CD4-positive, alpha-beta memory T cell (primary cell): ENCODE measurements at regions of chr10 and their contacts with region 1.

Region 1: DNA sequence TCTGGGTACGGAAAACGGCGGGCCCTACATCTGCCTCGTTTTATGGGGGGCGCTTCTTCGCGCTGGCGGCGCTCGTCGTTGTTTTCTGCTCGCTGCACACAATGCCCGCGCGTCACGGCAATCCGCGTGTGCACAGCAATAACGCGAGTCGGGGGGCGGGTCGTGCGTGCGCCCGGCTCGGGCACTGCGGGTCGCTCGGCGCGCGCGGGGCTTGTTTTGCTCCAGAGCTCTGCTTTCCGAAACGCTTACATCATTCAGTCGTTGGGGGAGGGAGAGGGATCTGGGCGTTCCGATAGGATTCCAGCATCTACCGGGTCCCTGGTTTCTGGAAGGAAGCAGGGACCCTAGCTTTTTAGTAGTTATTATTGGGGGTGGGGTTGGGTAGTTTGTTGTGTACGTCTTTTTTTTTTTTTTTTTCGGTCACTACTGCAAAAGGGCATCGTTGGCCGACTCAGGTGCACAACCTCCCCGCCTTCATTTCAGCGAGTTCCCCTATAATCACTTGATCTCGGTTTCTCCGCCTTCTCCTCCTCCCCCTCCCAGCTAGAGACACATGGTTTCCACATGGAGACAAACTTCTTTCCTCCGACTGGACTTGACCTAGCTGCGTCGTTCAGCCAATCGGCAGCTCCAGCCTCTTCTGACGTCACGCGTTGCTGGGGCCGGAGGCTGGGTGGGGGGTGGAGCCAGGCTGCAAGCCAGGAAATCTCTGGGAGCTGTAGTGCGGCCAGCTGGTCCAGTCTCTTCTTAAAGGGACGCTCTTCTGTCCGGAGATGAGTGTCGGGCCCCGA is 3.5 kb downstream of the MXI1 start:
- DNase-seq: peak; percentile 87 to 93 (median 88)
- H3K4me3 ChIP-seq: peak overlapping the region; percentile 42 to 78
- H3K4me3 Mint-ChIP-seq: peak overlapping the region; percentile 91 to 99 (median 94)
- H3K27ac ChIP-seq: peak overlapping the region; percentile 92
- H3K27ac Mint-ChIP-seq: peak overlapping the region; percentile 94 to 99 (median 97)
- H3K4me1 ChIP-seq: peaks cover 59% of the 10 kb centered on the region
- H3K4me1 Mint-ChIP-seq: peaks cover 43 to 86% (median 52%) of the 10 kb centered on the region in 4 donors
- H3K27me3 ChIP-seq: no peaks in the 10 kb centered on the region
- H3K27me3 Mint-ChIP-seq: no peaks in the 10 kb centered on the region

Region 2: DNA sequence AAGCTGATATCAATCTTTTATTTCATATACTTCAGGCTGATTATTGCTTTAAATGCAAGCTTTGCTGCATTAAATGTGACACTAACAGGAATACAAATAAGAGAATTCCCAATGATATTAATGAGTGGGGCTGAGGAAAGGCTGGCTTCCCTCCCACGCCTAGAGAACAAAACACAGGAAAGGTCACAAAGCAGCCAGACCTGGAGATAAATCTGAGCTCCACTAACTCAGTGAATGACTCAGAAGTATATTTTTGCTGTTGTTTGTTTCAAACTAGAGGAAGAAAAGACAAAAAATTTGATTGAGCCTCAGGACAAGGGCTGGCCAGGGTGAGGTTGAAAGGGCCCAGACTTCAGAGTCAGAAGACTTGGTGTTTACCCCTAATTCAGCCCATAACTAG is 375.6 kb before region 1 on chr10:
- CTCF ChIA-PET with region 1: no interaction called
- POLR2A ChIA-PET with region 1: no interaction called
- intact Hi-C with region 1: no loop called
- DNase-seq: no peak
- H3K4me3 ChIP-seq: no peak overlapping the region
- H3K4me3 Mint-ChIP-seq: no peak overlapping the region
- H3K27ac ChIP-seq: no peak overlapping the region
- H3K27ac Mint-ChIP-seq: no peak overlapping the region
- H3K4me1 ChIP-seq: no peaks in the 10 kb centered on the region
- H3K4me1 Mint-ChIP-seq: no peaks in the 10 kb centered on the region
- H3K27me3 ChIP-seq: no peaks in the 10 kb centered on the region
- H3K27me3 Mint-ChIP-seq: peaks cover 8 to 10% of the 10 kb centered on the region in 2 donors

Region 3: GRCh38 chr10:109941236-109941862 is 269.5 kb before region 1 on chr10:
- CTCF ChIA-PET with region 1: no interaction called
- POLR2A ChIA-PET with region 1: no interaction called
- intact Hi-C with region 1: no loop called
- DNase-seq: no peak
- H3K4me3 ChIP-seq: no peak overlapping the region
- H3K4me3 Mint-ChIP-seq: no peak overlapping the region
- H3K27ac ChIP-seq: no peak overlapping the region
- H3K27ac Mint-ChIP-seq: no peak overlapping the region
- H3K4me1 ChIP-seq: peaks cover 40% of the 10 kb centered on the region
- H3K4me1 Mint-ChIP-seq: peaks cover 28 to 46% (median 37%) of the 10 kb centered on the region in 4 donors
- H3K27me3 ChIP-seq: no peaks in the 10 kb centered on the region
- H3K27me3 Mint-ChIP-seq: no peaks in the 10 kb centered on the region

Region 4: DNA sequence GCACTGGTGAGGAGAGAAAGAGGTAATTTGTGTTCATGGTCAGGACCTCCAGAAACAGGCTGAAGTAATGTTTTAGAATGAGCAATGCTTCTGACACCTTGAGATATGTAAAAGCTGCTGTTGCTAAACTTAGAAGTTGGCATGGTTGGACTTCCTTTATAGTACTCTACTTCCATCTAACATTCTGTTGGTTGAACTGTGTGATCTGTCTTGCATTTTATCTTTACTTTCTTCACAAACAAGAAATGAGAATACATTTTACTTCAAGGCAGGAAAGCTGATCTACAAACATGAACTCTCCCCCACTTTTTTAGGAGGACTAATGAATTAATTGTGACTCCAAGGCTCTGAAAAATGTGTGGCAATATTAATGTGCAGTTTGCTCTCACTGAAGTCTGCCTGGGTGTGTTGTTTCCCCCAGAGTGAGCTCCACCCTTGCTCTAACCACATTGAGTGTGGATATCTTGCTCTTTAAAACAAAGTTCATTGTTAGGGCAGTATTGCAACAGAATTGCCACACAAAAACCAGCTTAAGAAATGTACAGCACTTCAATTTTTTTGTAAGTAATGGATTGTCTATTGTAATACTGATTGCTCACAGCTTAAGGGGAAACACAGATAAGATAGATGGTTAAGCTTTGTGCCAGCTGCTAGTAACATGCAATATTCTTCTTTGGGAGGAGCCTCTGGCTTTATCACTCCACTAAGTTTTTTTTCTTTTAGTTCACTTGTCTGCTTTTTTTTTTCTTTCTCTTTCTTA is 134.1 kb before region 1 on chr10:
- CTCF ChIA-PET with region 1: interaction called, 3 read pairs
- POLR2A ChIA-PET with region 1: interaction called, 6 read pairs
- intact Hi-C with region 1: loop called (anchors 5 kb)
- DNase-seq: peak; percentile 59 to 73 (median 66)
- H3K4me3 ChIP-seq: peak overlapping the region; percentile 48 to 53
- H3K4me3 Mint-ChIP-seq: peak overlapping the region; percentile 87 to 96 (median 92)
- H3K27ac ChIP-seq: peak overlapping the region; percentile 59
- H3K27ac Mint-ChIP-seq: peak overlapping the region; percentile 89 to 98 (median 92)
- H3K4me1 ChIP-seq: peaks cover 100% of the 10 kb centered on the region
- H3K4me1 Mint-ChIP-seq: peaks cover 69 to 92% (median 81%) of the 10 kb centered on the region in 4 donors
- H3K27me3 ChIP-seq: no peaks in the 10 kb centered on the region
- H3K27me3 Mint-ChIP-seq: no peaks in the 10 kb centered on the region

Region 5: GRCh38 chr10:110192552-110192951 is 18.3 kb before region 1 on chr10:
- CTCF ChIA-PET with region 1: interaction called, 5 read pairs
- POLR2A ChIA-PET with region 1: interaction called, 11 read pairs
- intact Hi-C with region 1: no loop called
- DNase-seq: no peak
- H3K4me3 ChIP-seq: no peak overlapping the region
- H3K4me3 Mint-ChIP-seq: no peak overlapping the region
- H3K27ac ChIP-seq: no peak overlapping the region
- H3K27ac Mint-ChIP-seq: no peak overlapping the region
- H3K4me1 ChIP-seq: no peaks in the 10 kb centered on the region
- H3K4me1 Mint-ChIP-seq: no peaks in the 10 kb centered on the region
- H3K27me3 ChIP-seq: peaks cover 10% of the 10 kb centered on the region
- H3K27me3 Mint-ChIP-seq: peaks cover 17 to 19% of the 10 kb centered on the region in 2 donors

Region 6: DNA sequence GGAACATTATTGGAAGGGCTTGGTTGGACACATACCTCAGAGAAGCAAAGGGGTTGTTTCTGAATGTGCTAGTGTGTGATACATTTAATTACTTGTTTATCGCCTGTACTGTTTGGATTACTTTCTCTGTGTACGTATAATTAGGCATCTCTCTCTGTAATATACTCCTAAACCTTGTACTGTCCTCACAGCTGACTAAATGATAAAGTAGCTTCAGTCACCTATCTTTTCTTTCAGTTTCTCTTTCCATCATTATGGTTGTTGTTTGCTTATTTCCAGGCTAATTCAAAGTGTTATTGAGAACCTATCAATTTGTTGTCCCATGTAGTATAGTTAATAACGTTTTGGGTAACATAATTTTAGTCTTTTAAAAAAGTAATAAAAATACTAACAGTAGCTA is 30.5 kb after region 1 on chr10:
- CTCF ChIA-PET with region 1: no interaction called
- POLR2A ChIA-PET with region 1: interaction called, 6 read pairs
- intact Hi-C with region 1: loop called (anchors 5 kb)
- DNase-seq: no peak
- H3K4me3 ChIP-seq: no peak overlapping the region
- H3K4me3 Mint-ChIP-seq: peak overlapping the region in 7 of 8 donors; percentile 12 to 83 (median 70)
- H3K27ac ChIP-seq: no peak overlapping the region
- H3K27ac Mint-ChIP-seq: peak overlapping the region in 3 of 7 donors; percentile 0 to 74 (median 63)
- H3K4me1 ChIP-seq: peaks cover 28% of the 10 kb centered on the region
- H3K4me1 Mint-ChIP-seq: peaks cover 22 to 48% (median 35%) of the 10 kb centered on the region in 4 donors
- H3K27me3 ChIP-seq: no peaks in the 10 kb centered on the region
- H3K27me3 Mint-ChIP-seq: no peaks in the 10 kb centered on the region

Region 7: GRCh38 chr10:110279407-110279986 is 68.6 kb after region 1 on chr10:
- CTCF ChIA-PET with region 1: interaction called, 56 read pairs
- POLR2A ChIA-PET with region 1: interaction called, 46 read pairs
- intact Hi-C with region 1: loop called (anchors 1 kb)
- DNase-seq: peak; percentile 54 to 58 (median 58)
- H3K4me3 ChIP-seq: no peak overlapping the region
- H3K4me3 Mint-ChIP-seq: peak overlapping the region in 2 of 8 donors; percentile 32 to 58
- H3K27ac ChIP-seq: no peak overlapping the region
- H3K27ac Mint-ChIP-seq: peak overlapping the region in 1 of 7 donors; percentile 51
- H3K4me1 ChIP-seq: peaks cover 22% of the 10 kb centered on the region
- H3K4me1 Mint-ChIP-seq: peaks cover 18 to 50% (median 36%) of the 10 kb centered on the region in 4 donors
- H3K27me3 ChIP-seq: no peaks in the 10 kb centered on the region
- H3K27me3 Mint-ChIP-seq: no peaks in the 10 kb centered on the region

Region 8: GRCh38 chr10:110497438-110498086 is 286.7 kb after region 1 on chr10 and contains the start of gene DUSP5:
- CTCF ChIA-PET with region 1: no interaction called
- POLR2A ChIA-PET with region 1: interaction called, 54 read pairs
- intact Hi-C with region 1: loop called (anchors 2 kb)
- DNase-seq: peak; percentile 93 to 98 (median 96)
- H3K4me3 ChIP-seq: peak within 1 kb of the TSS; percentile 76 to 83
- H3K4me3 Mint-ChIP-seq: peak within 1 kb of the TSS; percentile 93 to 98 (median 96)
- H3K27ac ChIP-seq: peak within 1 kb of the TSS; percentile 79
- H3K27ac Mint-ChIP-seq: peak within 1 kb of the TSS; percentile 91 to 98 (median 96)
- H3K4me1 ChIP-seq: peaks cover 52% of the 10 kb centered on the region
- H3K4me1 Mint-ChIP-seq: peaks cover 45 to 68% (median 55%) of the 10 kb centered on the region in 4 donors
- H3K27me3 ChIP-seq: no peaks in the 10 kb centered on the region
- H3K27me3 Mint-ChIP-seq: no peaks in the 10 kb centered on the region
- total RNA-seq, gene DUSP5: 3.5 to 3.8 TPM

Region 9: DNA sequence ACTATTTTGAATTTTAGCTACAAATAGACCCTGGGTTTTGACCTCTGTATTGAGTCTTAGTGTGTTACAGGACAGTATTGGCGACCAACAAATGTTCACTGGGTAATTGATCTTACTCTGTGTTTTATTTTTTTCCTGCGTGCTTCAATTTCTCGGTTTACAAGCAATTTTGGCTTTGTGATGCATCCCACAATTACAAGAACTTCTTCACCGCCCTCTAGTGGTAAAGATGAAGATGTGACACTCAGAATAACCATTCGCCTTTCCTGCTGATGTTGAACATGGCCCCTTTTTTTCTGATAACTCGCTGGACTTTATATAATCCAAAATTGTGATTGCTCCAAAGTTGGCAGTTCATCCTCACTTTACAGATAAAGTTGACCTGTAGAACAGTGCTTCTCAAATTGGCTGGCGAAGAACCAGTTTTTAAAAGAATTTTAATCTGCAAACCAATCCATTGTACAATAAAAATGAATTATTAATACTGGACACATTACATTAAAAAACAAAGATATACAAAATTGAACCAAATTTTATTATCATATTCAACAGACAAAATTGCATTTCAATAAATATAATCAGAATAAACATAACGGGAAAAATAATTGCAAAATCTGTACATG is 336.4 kb after region 1 on chr10:
- CTCF ChIA-PET with region 1: no interaction called
- POLR2A ChIA-PET with region 1: no interaction called
- intact Hi-C with region 1: no loop called
- DNase-seq: peak in 4 of 5 donors; percentile 67 to 74 (median 70)
- H3K4me3 ChIP-seq: no peak overlapping the region
- H3K4me3 Mint-ChIP-seq: no peak overlapping the region
- H3K27ac ChIP-seq: no peak overlapping the region
- H3K27ac Mint-ChIP-seq: peak overlapping the region in 1 of 7 donors; percentile 59
- H3K4me1 ChIP-seq: peaks cover 8% of the 10 kb centered on the region
- H3K4me1 Mint-ChIP-seq: peaks cover 4 to 8% (median 5%) of the 10 kb centered on the region in 4 donors
- H3K27me3 ChIP-seq: peaks cover 3% of the 10 kb centered on the region
- H3K27me3 Mint-ChIP-seq: peaks cover 1 to 13% of the 10 kb centered on the region in 2 donors